ENCODE measurements at regions of chr2 and their contacts with region 1.

Region 1: DNA sequence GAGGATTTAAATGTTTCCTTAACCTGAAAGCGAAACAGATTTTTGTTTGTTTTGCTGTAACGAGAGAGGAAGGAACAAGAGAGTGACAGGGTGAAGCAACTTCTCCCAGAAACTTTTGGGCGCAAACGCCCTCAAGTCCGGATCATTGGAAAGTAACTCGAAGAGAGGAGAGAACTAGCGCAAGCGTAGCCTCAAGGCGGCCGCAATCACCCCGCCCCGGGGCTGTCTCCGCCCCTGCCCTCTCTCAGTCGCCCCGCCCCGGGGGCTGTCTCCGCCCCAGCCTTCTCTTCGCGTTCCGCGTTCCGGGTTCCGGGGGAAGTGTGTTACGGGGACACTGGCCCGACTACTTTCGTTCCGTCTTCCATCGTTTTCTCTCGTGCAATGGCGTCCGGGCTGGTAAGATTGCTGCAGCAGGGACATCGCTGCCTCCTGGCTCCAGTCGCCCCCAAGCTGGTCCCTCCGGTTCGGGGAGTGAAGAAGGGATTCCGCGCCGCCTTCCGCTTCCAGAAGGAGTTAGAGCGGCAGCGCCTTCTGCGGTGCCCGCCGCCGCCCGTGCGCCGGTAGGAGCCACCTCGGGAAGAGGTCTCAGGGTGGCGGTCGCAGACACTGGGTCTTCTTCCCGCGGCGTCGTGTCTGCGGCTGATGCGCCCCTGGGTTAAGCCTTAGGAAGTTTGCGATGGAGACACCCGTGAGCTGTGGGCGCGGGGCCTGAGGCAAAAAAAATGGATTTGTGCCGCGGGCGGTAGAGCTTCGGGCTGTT is at the start of gene MRPL44:
- DNase-seq: peak; percentile 96
- H3K4me3 Mint-ChIP-seq: peak within 1 kb of the TSS; percentile 89
- H3K27ac Mint-ChIP-seq: peak within 1 kb of the TSS; percentile 87
- H3K4me1 Mint-ChIP-seq: peaks cover 71% of the 10 kb centered on the region
- H3K27me3 Mint-ChIP-seq: no peaks in the 10 kb centered on the region
- total RNA-seq, gene MRPL44: 33.6 and 34.3 TPM in 2 replicates

Region 2: GRCh38 chr2:222655787-222656525 is 1301.3 kb before region 1 on chr2 and contains the start of gene FARSB:
- intact Hi-C with region 1: loop called (anchors 10 kb)
- DNase-seq: peak; percentile 92
- H3K4me3 Mint-ChIP-seq: peak within 1 kb of the TSS; percentile 98
- H3K27ac Mint-ChIP-seq: peak within 1 kb of the TSS; percentile 93
- H3K4me1 Mint-ChIP-seq: peaks cover 38% of the 10 kb centered on the region
- H3K27me3 Mint-ChIP-seq: no peaks in the 10 kb centered on the region
- total RNA-seq, gene FARSB: 47.7 and 49.8 TPM in 2 replicates

Region 3: GRCh38 chr2:223837287-223838061 is 119.8 kb before region 1 on chr2 and contains the start of gene AP1S3:
- intact Hi-C with region 1: loop called (anchors 5 kb)
- DNase-seq: peak; percentile 67
- H3K4me3 Mint-ChIP-seq: peak within 1 kb of the TSS; percentile 92
- H3K27ac Mint-ChIP-seq: peak within 1 kb of the TSS; percentile 82
- H3K4me1 Mint-ChIP-seq: peaks cover 17% of the 10 kb centered on the region
- H3K27me3 Mint-ChIP-seq: no peaks in the 10 kb centered on the region
- total RNA-seq, gene AP1S3: 12.7 and 13.9 TPM in 2 replicates

Region 4: DNA sequence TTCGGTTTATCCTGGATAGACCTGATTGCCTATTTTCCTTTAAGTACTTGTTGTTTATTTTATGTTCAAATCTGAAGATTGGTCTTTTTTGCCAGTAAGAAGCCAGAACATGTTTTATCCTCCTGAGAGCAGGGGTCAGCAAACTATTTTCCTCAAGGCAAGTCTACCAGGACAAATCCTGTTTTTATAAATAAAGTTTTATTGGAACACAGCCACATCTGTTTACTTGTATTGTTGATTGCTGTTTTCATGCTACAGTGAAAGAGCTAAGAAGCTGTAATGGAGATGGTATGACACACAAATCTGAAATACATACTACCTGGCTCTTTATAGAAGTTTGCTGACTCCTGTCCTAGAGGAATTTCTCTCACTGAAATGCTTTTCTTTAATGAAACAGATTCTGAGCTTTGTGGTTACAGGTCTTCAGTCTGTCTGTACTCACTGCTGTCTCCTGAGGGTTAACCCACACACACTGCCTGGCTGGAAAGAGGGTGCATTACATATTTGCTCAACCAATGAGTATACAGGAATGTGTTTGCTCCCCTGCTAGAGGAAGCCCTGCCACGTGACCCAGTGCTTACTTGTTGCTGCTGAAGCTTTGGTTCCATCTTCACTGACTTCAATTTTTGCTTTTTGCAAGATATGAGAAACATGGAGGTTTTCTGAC is 22.6 kb after region 1 on chr2:
- intact Hi-C with region 1: no loop called
- DNase-seq: no peak
- H3K4me3 Mint-ChIP-seq: no peak overlapping the region
- H3K27ac Mint-ChIP-seq: no peak overlapping the region
- H3K4me1 Mint-ChIP-seq: peaks cover 3% of the 10 kb centered on the region
- H3K27me3 Mint-ChIP-seq: no peaks in the 10 kb centered on the region

Region 5: GRCh38 chr2:224025874-224026273 is 68.6 kb after region 1 on chr2:
- intact Hi-C with region 1: loop called (anchors 5 kb)
- DNase-seq: peak; percentile 74
- H3K4me3 Mint-ChIP-seq: peak overlapping the region; percentile 40
- H3K27ac Mint-ChIP-seq: peak overlapping the region; percentile 96
- H3K4me1 Mint-ChIP-seq: peaks cover 56% of the 10 kb centered on the region
- H3K27me3 Mint-ChIP-seq: no peaks in the 10 kb centered on the region

Region 6: GRCh38 chr2:225041851-225042799 is 1084.9 kb after region 1 on chr2 and contains the start of gene DOCK10:
- intact Hi-C with region 1: loop called (anchors 10 kb)
- DNase-seq: peak; percentile 40
- H3K4me3 Mint-ChIP-seq: peak within 1 kb of the TSS; percentile 91
- H3K27ac Mint-ChIP-seq: peak within 1 kb of the TSS; percentile 92
- H3K4me1 Mint-ChIP-seq: peaks cover 54% of the 10 kb centered on the region
- H3K27me3 Mint-ChIP-seq: peaks cover 33% of the 10 kb centered on the region
- total RNA-seq, gene DOCK10: 100 and 107 TPM in 2 replicates